Posterior vena cava (tissue), 2 donors: ENCODE measurements at regions of chr19 and their contacts with region 1.

Region 1: GRCh38 chr19:16185123-16185767 is at the start of gene FAM32A:
- DNase-seq: peak; percentile 100
- total RNA-seq, gene FAM32A: 46.4 to 47.8 TPM

Region 2: GRCh38 chr19:15629003-15629880 is 556.0 kb before region 1 on chr19:
- intact Hi-C with region 1: loop called (anchors 5 to 10 kb)
- DNase-seq: peak; percentile 95

Region 3: GRCh38 chr19:16025108-16026101 is 159.8 kb before region 1 on chr19:
- intact Hi-C with region 1: loop called in 1 of 2 experiments (anchors 5 kb)
- DNase-seq: peak; percentile 84

Region 4: DNA sequence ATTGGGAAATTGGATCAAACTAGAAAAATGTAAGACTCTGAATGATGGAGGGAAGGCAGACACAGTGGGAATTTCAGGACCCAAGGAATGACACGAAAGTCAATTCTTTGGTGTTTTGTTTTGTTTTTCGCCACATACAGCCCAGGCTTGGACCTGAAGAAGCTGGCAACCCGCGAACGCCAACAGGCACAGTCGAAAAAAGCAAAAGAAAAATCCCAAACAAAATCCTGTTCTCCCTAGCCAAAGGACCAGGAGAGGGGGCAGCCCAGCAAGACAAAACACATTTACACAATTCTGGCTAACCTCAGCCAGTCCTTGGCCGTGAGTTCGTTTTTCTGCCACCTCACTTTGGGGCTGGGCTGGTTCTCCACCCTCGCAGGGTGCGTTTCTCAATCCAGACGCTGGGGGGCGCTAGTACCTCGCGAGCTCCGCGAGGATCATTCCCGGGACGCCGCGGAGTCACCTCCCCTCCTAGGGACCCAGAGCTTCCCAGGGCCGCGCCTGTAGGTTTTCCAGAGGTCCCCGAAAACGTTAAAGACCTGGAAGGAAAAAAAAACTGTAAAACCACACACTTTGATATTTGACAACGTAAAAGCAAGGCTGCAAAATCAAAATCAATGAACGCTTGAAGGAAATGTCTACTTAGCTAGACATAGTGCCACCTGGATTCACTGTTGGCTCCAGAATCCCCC is 143.8 kb before region 1 on chr19:
- intact Hi-C with region 1: loop called (anchors 2 to 5 kb)
- DNase-seq: peak; percentile 94

Region 5: DNA sequence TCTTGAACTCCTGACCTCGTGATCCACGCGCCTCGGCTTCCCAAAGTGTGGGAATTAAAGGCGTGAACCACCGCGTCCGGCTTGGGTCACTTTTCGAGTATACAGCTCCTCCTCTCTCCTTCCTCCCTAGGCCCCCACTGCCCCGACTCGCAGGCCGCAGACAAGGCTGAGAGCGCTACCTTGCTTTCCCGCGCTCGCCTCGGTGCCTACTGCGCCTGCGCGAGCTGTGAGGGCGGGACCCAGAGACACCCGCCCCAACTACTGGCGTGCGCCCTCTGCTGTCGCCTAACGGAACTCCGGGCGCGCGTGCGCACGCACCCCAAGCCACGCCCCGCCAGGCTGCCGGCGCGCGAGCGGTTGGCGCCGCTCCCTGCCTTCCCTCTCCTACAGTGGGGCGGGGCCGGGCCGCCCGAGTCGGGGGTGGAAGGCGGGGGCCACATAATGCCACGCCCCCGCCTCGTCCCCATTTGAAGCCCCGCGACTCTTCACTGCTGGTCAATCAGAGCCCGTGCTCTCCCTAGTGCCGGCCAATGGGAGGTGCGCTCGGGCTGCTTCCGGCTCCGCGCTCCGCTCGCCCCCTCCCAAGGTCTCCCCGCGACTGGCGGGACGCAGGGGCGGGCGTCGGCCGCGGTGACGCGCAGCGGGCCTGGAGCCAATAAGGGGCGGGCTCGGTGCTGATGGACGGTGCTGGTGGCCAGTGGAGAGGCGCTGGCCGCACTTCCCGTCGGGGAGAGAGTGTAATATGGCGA is 73.9 kb before region 1 on chr19 and contains the start of gene RAB8A:
- intact Hi-C with region 1: loop called in 1 of 2 experiments (anchors 10 kb)
- DNase-seq: peak; percentile 100
- total RNA-seq, gene RAB8A: 53.5 to 58.3 TPM

Region 6: DNA sequence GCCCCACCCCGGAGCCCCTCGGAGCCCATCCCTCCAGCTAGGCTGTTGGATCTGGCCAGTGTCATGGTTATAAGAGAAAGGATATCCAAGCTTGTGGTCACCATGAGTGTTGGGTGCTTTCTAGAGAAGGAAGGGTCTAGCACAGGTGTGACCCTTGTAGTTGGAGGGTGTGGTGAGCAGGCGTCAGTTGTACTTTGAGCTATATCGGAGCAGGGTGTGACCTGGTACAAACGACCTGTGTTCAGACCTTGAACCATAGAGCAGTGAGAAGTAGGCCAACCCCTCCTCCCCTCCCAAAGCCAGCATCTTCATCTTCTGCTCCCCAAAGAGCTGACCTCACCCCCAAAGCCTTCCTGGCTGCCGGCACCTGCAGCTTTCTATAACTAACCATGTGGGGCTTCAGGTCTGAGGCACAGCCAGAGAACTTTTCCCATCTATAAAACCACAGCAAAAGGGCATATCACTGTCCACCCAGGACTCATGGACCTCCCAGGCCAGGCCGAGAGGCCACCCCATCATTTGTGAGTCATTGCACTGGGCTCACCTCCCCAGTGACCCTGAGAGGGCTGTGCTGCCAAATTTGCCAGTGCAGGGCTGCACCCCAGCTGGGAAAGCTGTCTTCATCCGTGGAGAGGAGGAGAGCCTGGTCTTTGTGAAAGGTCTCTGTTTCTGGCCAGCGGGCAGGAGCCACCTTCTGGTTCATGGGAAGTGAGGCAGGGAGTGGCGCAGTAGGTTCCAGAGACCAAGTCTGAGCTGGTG is 59.3 kb before region 1 on chr19:
- intact Hi-C with region 1: no loop called
- DNase-seq: no peak